A673 (cell line): ENCODE measurements at regions of chr4 and their contacts with region 1.

Region 1: GRCh38 chr4:122827879-122828601 is 1.4 kb downstream of the FGF2 start:
- DNase-seq: peak; percentile 71
- H3K4me3 ChIP-seq: peak overlapping the region; percentile 85
- H3K27ac ChIP-seq: peak overlapping the region; percentile 61
- H3K4me1 ChIP-seq: peaks cover 6% of the 10 kb centered on the region
- H3K27me3 ChIP-seq: no peaks in the 10 kb centered on the region
- CTCF ChIP-seq: peak; percentile 19; the same call in 1 of the 2 replicates

Region 2: DNA sequence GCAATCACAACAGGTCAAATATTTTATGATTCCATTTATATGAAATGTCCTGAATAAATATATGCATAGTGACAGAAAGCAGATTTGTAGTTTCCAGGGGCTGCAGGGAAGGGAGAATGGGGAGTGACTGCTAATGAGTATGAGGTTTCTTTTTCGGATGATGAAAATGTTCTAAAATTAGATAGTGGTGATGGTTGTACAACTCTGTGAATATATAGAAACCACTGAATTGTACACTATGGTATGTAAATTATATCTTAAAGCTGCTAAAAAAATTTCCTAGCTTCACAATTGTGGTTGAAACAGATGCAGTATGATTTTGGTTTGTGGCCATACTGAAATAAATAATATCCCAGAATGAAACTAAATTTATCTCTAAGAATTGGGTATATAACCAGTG is 358.6 kb before region 1 on chr4:
- CTCF ChIA-PET with region 1: no interaction called
- POLR2A ChIA-PET with region 1: no interaction called
- intact Hi-C with region 1: no loop called
- DNase-seq: no peak
- H3K4me3 ChIP-seq: no peak overlapping the region
- H3K27ac ChIP-seq: no peak overlapping the region
- H3K4me1 ChIP-seq: no peaks in the 10 kb centered on the region
- H3K27me3 ChIP-seq: no peaks in the 10 kb centered on the region
- CTCF ChIP-seq: no peak

Region 3: GRCh38 chr4:122798101-122798500 is 29.9 kb before region 1 on chr4:
- CTCF ChIA-PET with region 1: no interaction called
- POLR2A ChIA-PET with region 1: no interaction called
- intact Hi-C with region 1: loop called (anchors 1 kb)
- DNase-seq: peak; percentile 92
- H3K4me3 ChIP-seq: peak overlapping the region; percentile 1
- H3K27ac ChIP-seq: peak overlapping the region; percentile 78
- H3K4me1 ChIP-seq: peaks cover 29% of the 10 kb centered on the region
- H3K27me3 ChIP-seq: no peaks in the 10 kb centered on the region
- CTCF ChIP-seq: no peak

Region 4: DNA sequence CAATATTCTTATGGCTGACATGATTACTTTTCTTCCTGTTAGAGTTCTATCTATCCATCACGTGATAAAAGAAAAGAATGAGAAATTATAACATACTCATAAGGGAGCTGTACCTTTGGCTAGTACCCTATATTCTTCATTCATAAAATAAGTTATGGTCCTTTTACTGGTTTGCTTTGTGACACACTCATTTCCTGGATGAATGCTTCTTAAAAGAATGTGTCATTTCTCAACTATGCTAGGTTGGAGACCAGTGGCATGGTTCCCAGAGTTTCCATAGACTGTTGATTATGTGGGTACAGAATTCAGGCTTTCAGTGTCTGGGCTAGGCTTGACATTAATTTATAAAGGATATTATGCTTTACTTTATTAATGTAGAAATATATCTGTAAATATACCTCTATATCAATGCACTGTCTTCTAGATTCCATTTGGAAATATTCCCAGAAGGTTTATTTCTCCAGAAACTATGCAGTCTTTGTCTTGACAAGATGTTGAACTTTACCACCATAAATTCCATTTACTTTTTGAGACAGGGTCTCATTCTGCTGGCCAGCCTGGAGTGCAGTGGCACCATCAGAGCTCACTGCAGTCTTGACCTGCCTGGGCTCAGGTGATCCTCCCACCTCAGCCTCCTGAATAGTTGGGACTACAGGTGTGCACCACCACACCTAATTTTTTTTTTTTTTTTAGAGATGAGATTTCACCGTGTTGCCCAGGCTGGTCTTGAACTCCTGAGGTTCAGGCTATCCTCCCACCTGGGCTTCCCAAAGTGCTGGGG is 70.5 kb after region 1 on chr4:
- CTCF ChIA-PET with region 1: no interaction called
- POLR2A ChIA-PET with region 1: no interaction called
- intact Hi-C with region 1: loop called (anchors 2 kb)
- DNase-seq: peak; percentile 83
- H3K4me3 ChIP-seq: no peak overlapping the region
- H3K27ac ChIP-seq: no peak overlapping the region
- H3K4me1 ChIP-seq: peaks cover 22% of the 10 kb centered on the region
- H3K27me3 ChIP-seq: no peaks in the 10 kb centered on the region
- CTCF ChIP-seq: no peak

Region 5: GRCh38 chr4:122914292-122914904 is 86.4 kb after region 1 on chr4:
- CTCF ChIA-PET with region 1: no interaction called
- POLR2A ChIA-PET with region 1: no interaction called
- intact Hi-C with region 1: loop called (anchors 5 kb)
- DNase-seq: peak; percentile 44
- H3K4me3 ChIP-seq: no peak overlapping the region
- H3K27ac ChIP-seq: no peak overlapping the region
- H3K4me1 ChIP-seq: peaks cover 7% of the 10 kb centered on the region
- H3K27me3 ChIP-seq: no peaks in the 10 kb centered on the region
- CTCF ChIP-seq: peak; percentile 54